ENCODE measurements at regions of chrX and their contacts with region 1.

Region 1: DNA sequence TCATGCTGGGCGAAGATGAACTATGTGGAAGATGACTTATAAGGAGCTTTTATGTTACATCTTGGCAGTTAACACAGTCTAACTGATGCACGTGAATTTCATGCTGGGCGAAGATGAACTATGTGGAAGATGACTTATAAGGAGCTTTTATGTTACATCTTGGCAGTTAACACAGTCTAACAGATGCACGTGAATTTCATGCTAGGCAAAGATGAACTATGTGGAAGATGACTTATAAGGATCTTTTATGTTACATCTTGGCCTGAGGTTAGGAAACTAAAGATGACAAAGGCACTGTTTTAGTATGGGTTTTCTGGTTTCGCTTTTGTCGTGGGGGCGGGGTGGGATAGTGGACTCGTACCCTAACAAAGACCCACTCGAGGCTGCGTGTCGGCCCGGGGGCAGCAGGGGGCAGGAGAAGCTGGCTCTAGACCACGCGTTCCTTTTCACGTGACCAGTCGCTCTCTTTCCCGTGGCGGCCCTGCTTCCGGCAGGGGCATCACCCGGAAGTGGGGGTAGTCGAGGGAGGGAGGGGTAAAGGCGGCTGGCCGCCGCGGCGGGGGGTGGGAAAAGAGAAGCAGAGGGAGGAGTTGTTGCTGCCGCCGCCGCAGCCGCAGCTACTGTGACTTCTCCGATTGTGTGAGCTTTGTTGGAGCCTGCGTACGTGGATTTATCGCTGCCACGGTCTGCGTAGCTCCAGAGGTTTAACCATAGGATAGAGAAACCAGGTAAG is at the start of gene ATP7A:
- DNase-seq: peak; percentile 85 to 95 (median 91)
- H3K4me3 ChIP-seq: peak within 1 kb of the TSS; percentile 55 to 78
- H3K4me3 Mint-ChIP-seq: peak within 1 kb of the TSS; percentile 93 to 100 (median 96)
- H3K27ac ChIP-seq: peak within 1 kb of the TSS; percentile 82
- H3K27ac Mint-ChIP-seq: peak within 1 kb of the TSS; percentile 93 to 99 (median 98)
- H3K4me1 ChIP-seq: peaks cover 19% of the 10 kb centered on the region
- H3K4me1 Mint-ChIP-seq: peaks cover 10 to 31% (median 17%) of the 10 kb centered on the region in 4 donors
- H3K27me3 ChIP-seq: no peaks in the 10 kb centered on the region
- H3K27me3 Mint-ChIP-seq: no peaks in the 10 kb centered on the region
- total RNA-seq, gene ATP7A: 15.3 to 16.8 TPM

Region 2: GRCh38 chrX:77785486-77786364 is 124.5 kb before region 1 on chrX and contains the start of gene ATRX:
- CTCF ChIA-PET with region 1: no interaction called
- POLR2A ChIA-PET with region 1: no interaction called
- intact Hi-C with region 1: loop called (anchors 5 kb)
- DNase-seq: peak; percentile 80 to 87 (median 82)
- H3K4me3 ChIP-seq: peak within 1 kb of the TSS; percentile 54 to 57
- H3K4me3 Mint-ChIP-seq: peak within 1 kb of the TSS; percentile 98 to 100 (median 99)
- H3K27ac ChIP-seq: peak within 1 kb of the TSS; percentile 90
- H3K27ac Mint-ChIP-seq: peak within 1 kb of the TSS; percentile 99 to 100 (median 100)
- H3K4me1 ChIP-seq: peaks cover 45% of the 10 kb centered on the region
- H3K4me1 Mint-ChIP-seq: peaks cover 10 to 55% (median 26%) of the 10 kb centered on the region in 4 donors
- H3K27me3 ChIP-seq: no peaks in the 10 kb centered on the region
- H3K27me3 Mint-ChIP-seq: no peaks in the 10 kb centered on the region
- total RNA-seq, gene ATRX: 106 to 111 TPM

Region 3: GRCh38 chrX:77899081-77899828 is 11.0 kb before region 1 on chrX and contains the start of gene COX7B:
- CTCF ChIA-PET with region 1: interaction called, 32 read pairs
- POLR2A ChIA-PET with region 1: interaction called, 73 read pairs
- intact Hi-C with region 1: loop called (anchors 1 kb)
- DNase-seq: peak; percentile 82 to 91 (median 88)
- H3K4me3 ChIP-seq: peak within 1 kb of the TSS; percentile 42 to 76
- H3K4me3 Mint-ChIP-seq: peak within 1 kb of the TSS; percentile 84 to 96 (median 91)
- H3K27ac ChIP-seq: peak within 1 kb of the TSS; percentile 81
- H3K27ac Mint-ChIP-seq: peak within 1 kb of the TSS; percentile 88 to 99 (median 95)
- H3K4me1 ChIP-seq: peaks cover 25% of the 10 kb centered on the region
- H3K4me1 Mint-ChIP-seq: peaks cover 7 to 49% (median 20%) of the 10 kb centered on the region in 4 donors
- H3K27me3 ChIP-seq: no peaks in the 10 kb centered on the region
- H3K27me3 Mint-ChIP-seq: no peaks in the 10 kb centered on the region
- total RNA-seq, gene COX7B: 115 to 126 TPM

Region 4: GRCh38 chrX:77962068-77962902 is 52.0 kb after region 1 on chrX:
- CTCF ChIA-PET with region 1: no interaction called
- POLR2A ChIA-PET with region 1: interaction called, 5 read pairs
- intact Hi-C with region 1: loop called (anchors 2 kb)
- DNase-seq: peak in 4 of 5 donors; percentile 17 to 33 (median 24)
- H3K4me3 ChIP-seq: no peak overlapping the region
- H3K4me3 Mint-ChIP-seq: peak overlapping the region; percentile 63 to 88 (median 80)
- H3K27ac ChIP-seq: peak overlapping the region; percentile 9
- H3K27ac Mint-ChIP-seq: peak overlapping the region; percentile 51 to 93 (median 82)
- H3K4me1 ChIP-seq: peaks cover 21% of the 10 kb centered on the region
- H3K4me1 Mint-ChIP-seq: peaks cover 23 to 43% (median 30%) of the 10 kb centered on the region in 4 donors
- H3K27me3 ChIP-seq: no peaks in the 10 kb centered on the region
- H3K27me3 Mint-ChIP-seq: no peaks in the 10 kb centered on the region

Region 5: DNA sequence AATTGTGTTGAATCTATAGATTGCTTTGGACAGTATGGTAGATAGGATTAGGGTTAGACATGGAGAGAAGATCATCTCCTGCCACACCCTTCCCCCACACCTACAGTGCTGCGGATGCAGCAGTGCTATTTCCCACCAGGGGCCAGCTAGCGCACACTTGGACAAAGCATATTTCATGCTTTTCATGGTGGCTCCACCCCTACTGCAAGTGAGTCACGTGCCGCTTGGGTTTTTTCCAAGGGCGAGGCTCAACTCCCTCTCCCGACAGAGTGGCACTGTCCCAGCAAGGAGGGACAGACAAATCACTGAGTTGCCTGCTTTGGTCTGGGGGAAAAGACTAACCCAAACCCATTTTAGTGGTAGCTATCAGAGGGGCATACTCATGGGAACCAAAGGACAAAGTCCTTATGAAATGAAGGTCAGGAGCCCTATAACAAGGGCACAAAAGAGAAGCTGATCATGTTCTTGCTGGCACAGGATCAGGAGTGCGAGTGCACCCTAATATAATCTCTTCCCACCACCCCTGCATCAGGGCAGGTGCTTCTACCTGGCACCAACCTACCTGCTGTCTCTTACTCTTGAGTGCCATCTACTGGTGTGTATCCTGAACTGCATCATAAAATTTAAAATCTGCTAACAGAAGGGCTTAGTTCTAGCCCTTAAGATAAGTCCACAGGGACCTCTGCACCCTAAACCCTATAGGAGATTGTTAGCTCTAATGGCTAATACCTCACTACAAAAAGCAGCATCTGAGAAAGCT is 114.3 kb after region 1 on chrX:
- CTCF ChIA-PET with region 1: interaction called, 41 read pairs
- POLR2A ChIA-PET with region 1: no interaction called
- intact Hi-C with region 1: loop called (anchors 1 kb)
- DNase-seq: peak; percentile 33 to 56 (median 53)
- H3K4me3 ChIP-seq: no peak overlapping the region
- H3K4me3 Mint-ChIP-seq: no peak overlapping the region
- H3K27ac ChIP-seq: no peak overlapping the region
- H3K27ac Mint-ChIP-seq: peak overlapping the region in 3 of 7 donors; percentile 17 to 38 (median 28)
- H3K4me1 ChIP-seq: no peaks in the 10 kb centered on the region
- H3K4me1 Mint-ChIP-seq: peaks cover 0 to 7% (median 3%) of the 10 kb centered on the region in 4 donors
- H3K27me3 ChIP-seq: no peaks in the 10 kb centered on the region
- H3K27me3 Mint-ChIP-seq: no peaks in the 10 kb centered on the region

Region 6: GRCh38 chrX:78199851-78200250 is 289.6 kb after region 1 on chrX:
- CTCF ChIA-PET with region 1: no interaction called
- POLR2A ChIA-PET with region 1: no interaction called
- intact Hi-C with region 1: no loop called
- DNase-seq: peak in 4 of 5 donors; percentile 3 to 25 (median 14)
- H3K4me3 ChIP-seq: no peak overlapping the region
- H3K4me3 Mint-ChIP-seq: no peak overlapping the region
- H3K27ac ChIP-seq: no peak overlapping the region
- H3K27ac Mint-ChIP-seq: no peak overlapping the region
- H3K4me1 ChIP-seq: no peaks in the 10 kb centered on the region
- H3K4me1 Mint-ChIP-seq: peaks cover 0 to 2% (median 0%) of the 10 kb centered on the region in 4 donors
- H3K27me3 ChIP-seq: no peaks in the 10 kb centered on the region
- H3K27me3 Mint-ChIP-seq: no peaks in the 10 kb centered on the region

Region 7: DNA sequence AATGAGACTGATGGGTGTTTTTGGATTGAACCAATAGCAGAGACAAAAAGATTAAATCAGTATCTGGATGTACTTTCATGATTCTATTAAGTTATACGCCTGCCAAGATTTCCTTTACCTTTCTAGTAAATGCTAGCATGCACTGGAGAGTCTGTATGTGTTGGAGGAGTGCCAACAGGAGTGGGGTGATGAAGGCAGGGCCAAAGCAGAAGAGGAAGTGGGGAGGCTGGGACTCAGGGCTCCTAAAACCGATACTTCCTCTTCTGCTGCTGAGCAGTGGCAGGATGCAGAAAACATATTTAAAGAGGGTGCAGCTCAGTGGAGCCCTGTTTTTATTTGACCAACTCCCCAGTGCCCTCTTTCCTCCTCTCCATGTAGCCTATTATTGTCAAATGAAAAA is 411.5 kb after region 1 on chrX:
- CTCF ChIA-PET with region 1: no interaction called
- POLR2A ChIA-PET with region 1: no interaction called
- intact Hi-C with region 1: loop called (anchors 10 kb)
- DNase-seq: peak; percentile 66 to 77 (median 74)
- H3K4me3 ChIP-seq: no peak overlapping the region
- H3K4me3 Mint-ChIP-seq: peak overlapping the region; percentile 44 to 75 (median 60)
- H3K27ac ChIP-seq: no peak overlapping the region
- H3K27ac Mint-ChIP-seq: peak overlapping the region; percentile 54 to 90 (median 83)
- H3K4me1 ChIP-seq: peaks cover 30% of the 10 kb centered on the region
- H3K4me1 Mint-ChIP-seq: peaks cover 20 to 42% (median 28%) of the 10 kb centered on the region in 4 donors
- H3K27me3 ChIP-seq: no peaks in the 10 kb centered on the region
- H3K27me3 Mint-ChIP-seq: no peaks in the 10 kb centered on the region